WTC11 (cell line): ENCODE measurements at regions of chr11 and their contacts with region 1.

Region 1: GRCh38 chr11:130861902-130862860 is 54.1 kb downstream of the SNX19 start:
- DNase-seq: peak; percentile 95
- ATAC-seq: peak; percentile 88
- H3K4me3 Mint-ChIP-seq: peak overlapping the region; percentile 43
- H3K27ac Mint-ChIP-seq: no peak overlapping the region
- H3K4me1 Mint-ChIP-seq: peaks cover 8% of the 10 kb centered on the region
- H3K27me3 Mint-ChIP-seq: peaks cover 11% of the 10 kb centered on the region
- CTCF ChIP-seq: peak; percentile 100

Region 2: GRCh38 chr11:130442737-130443136 is 419.4 kb before region 1 on chr11:
- CTCF ChIA-PET with region 1: interaction called, 14 read pairs
- POLR2A ChIA-PET with region 1: no interaction called
- DNase-seq: no peak
- ATAC-seq: no peak
- H3K4me3 Mint-ChIP-seq: no peak overlapping the region
- H3K27ac Mint-ChIP-seq: no peak overlapping the region
- H3K4me1 Mint-ChIP-seq: no peaks in the 10 kb centered on the region
- H3K27me3 Mint-ChIP-seq: peaks cover 50% of the 10 kb centered on the region
- CTCF ChIP-seq: no peak

Region 3: GRCh38 chr11:130448416-130449309 is 413.5 kb before region 1 on chr11 and contains the start of gene ADAMTS15:
- CTCF ChIA-PET with region 1: interaction called, 19 read pairs
- POLR2A ChIA-PET with region 1: no interaction called
- DNase-seq: peak; percentile 91
- ATAC-seq: peak; percentile 84
- H3K4me3 Mint-ChIP-seq: peak within 1 kb of the TSS; percentile 79
- H3K27ac Mint-ChIP-seq: no peak within 1 kb of the TSS
- H3K4me1 Mint-ChIP-seq: peaks cover 10% of the 10 kb centered on the region
- H3K27me3 Mint-ChIP-seq: peaks cover 85% of the 10 kb centered on the region
- CTCF ChIP-seq: no peak
- total RNA-seq, gene ADAMTS15: 3.1 to 3.7 TPM (median 3.2 TPM) in 3 replicates

Region 4: DNA sequence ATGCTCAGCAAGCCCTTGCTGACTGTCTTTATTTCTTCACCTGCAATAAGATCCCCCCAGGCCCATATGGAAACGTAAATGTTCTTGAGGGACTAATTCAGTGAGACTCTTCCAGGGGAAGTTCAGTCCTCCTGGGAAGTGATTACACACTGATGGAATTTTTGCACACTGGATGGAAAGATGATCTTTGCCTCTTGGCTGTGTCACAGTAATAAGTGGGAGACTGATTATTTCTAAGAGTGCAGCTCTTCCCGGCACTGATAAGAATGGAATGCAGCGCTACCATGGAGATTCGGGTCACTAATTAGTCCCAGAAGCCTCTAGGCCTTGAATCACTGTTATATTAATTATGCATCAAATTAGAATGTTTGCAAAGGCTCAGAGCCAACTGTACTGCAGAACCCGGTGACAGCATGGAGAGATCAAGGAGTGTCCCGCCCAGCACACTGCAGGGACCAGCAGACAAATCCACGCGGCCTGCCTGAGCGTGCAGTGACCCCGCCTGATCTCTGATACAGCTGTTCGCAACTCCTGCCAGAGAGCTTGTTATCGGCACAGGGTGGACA is 124.2 kb before region 1 on chr11:
- CTCF ChIA-PET with region 1: no interaction called
- POLR2A ChIA-PET with region 1: no interaction called
- DNase-seq: no peak
- ATAC-seq: no peak
- H3K4me3 Mint-ChIP-seq: no peak overlapping the region
- H3K27ac Mint-ChIP-seq: no peak overlapping the region
- H3K4me1 Mint-ChIP-seq: peaks cover 14% of the 10 kb centered on the region
- H3K27me3 Mint-ChIP-seq: peaks cover 10% of the 10 kb centered on the region
- CTCF ChIP-seq: no peak

Region 5: DNA sequence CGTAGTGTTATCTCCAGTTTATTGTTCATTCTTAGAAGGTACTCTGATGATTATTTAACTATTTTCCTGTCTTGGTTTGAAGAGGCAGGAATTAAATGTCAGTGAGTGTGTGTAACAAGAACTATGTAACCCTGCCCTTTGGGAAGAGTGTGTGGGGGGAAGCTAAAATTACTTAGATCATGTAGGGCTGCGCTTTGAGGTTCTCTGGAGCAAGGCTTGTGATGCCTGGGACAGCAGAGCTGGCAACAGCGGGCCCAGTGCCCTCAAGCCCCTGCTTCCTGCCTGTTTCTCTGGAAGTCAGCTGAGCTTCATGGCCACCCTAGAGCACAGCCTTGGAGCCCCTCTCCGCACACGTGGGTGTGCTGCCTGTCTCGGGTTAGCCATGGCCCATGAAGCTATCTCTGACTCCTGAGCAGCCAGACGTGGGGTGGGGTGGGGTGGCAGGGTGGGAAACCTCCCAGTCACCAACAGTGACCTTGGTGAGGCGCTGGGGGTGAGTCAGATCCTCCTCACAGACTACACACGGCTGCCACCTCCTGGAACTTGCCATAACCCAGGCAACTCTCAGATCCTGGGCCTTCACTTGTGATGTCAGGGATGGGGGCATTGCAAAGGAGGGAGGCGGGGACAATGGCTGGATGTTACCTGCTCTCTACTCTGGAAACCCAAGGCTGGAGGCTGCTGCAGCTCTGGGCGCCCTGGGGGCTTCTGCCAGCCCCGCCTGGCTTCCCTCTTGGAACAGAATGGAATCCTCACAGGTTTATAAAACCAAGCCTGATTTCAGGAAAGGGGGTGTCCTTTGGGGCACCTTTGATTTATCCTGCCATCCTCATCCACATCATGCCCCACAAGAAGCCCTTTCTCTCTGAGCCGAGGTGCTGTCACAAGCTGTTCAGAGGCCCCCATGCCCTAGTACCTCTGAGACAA is 34.5 kb before region 1 on chr11:
- CTCF ChIA-PET with region 1: interaction called, 19 read pairs
- POLR2A ChIA-PET with region 1: no interaction called
- DNase-seq: peak; percentile 78
- ATAC-seq: peak; percentile 97
- H3K4me3 Mint-ChIP-seq: no peak overlapping the region
- H3K27ac Mint-ChIP-seq: no peak overlapping the region
- H3K4me1 Mint-ChIP-seq: peaks cover 25% of the 10 kb centered on the region
- H3K27me3 Mint-ChIP-seq: no peaks in the 10 kb centered on the region; the same call in 1 of the 2 replicates
- CTCF ChIP-seq: no peak; the same call in 1 of the 2 replicates

Region 6: DNA sequence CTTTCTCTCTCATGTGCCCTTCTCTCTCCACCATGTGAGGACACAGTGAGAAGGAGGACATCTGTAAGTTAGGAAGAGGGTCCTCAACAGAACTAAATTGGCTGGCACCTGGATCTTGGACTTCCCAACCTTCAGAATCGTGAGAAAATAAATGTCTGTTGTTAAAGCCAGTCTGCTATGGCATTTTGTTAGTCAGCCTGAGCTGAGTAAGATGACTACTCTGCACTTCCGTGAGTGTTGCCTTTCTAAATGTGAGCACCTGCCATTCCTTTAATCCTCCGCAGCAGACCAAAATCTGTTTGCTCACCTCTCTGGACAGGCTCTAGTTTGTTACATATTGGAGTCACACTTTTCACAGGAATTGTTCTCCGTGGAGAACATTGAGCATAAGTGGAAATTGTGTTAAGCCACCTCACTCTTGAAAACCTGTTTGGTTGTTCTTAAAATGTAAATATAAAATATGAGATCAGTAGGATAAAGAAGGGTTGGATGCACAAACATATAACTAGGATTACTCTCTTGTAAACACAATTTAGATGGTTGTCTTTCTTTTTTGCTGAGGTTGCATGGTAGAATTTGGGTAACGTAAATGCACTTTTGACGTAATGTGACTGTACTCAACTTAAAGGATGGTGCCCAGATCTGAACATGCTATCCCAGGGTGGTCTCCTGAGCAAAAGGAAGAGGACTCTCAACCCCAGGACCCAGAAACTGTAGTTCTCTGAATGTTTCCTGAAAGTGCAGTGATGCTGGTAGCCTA is 11.8 kb before region 1 on chr11:
- CTCF ChIA-PET with region 1: interaction called, 15 read pairs
- POLR2A ChIA-PET with region 1: no interaction called
- DNase-seq: no peak
- ATAC-seq: no peak
- H3K4me3 Mint-ChIP-seq: no peak overlapping the region
- H3K27ac Mint-ChIP-seq: no peak overlapping the region
- H3K4me1 Mint-ChIP-seq: no peaks in the 10 kb centered on the region
- H3K27me3 Mint-ChIP-seq: peaks cover 4% of the 10 kb centered on the region
- CTCF ChIP-seq: no peak

Region 7: GRCh38 chr11:131005829-131006228 is 143.6 kb after region 1 on chr11:
- CTCF ChIA-PET with region 1: no interaction called
- POLR2A ChIA-PET with region 1: no interaction called
- DNase-seq: no peak
- ATAC-seq: no peak
- H3K4me3 Mint-ChIP-seq: no peak overlapping the region
- H3K27ac Mint-ChIP-seq: no peak overlapping the region
- H3K4me1 Mint-ChIP-seq: no peaks in the 10 kb centered on the region
- H3K27me3 Mint-ChIP-seq: no peaks in the 10 kb centered on the region; the same call in none of the 2 replicates
- CTCF ChIP-seq: no peak

Region 8: GRCh38 chr11:131044867-131045266 is 182.7 kb after region 1 on chr11:
- CTCF ChIA-PET with region 1: no interaction called
- POLR2A ChIA-PET with region 1: no interaction called
- DNase-seq: no peak
- ATAC-seq: no peak
- H3K4me3 Mint-ChIP-seq: no peak overlapping the region
- H3K27ac Mint-ChIP-seq: no peak overlapping the region
- H3K4me1 Mint-ChIP-seq: peaks cover 15% of the 10 kb centered on the region
- H3K27me3 Mint-ChIP-seq: no peaks in the 10 kb centered on the region; the same call in none of the 2 replicates
- CTCF ChIP-seq: no peak